AG04449 (cell line): ENCODE measurements at regions of chr2 and their contacts with region 1.

Region 1: GRCh38 chr2:120856421-120856862 is 120.8 kb downstream of the GLI2 start:
- DNase-seq: no peak
- H3K4me3 ChIP-seq: no peak overlapping the region
- CTCF ChIP-seq: peak; percentile 49

Region 2: GRCh38 chr2:120429586-120430500 is 426.6 kb before region 1 on chr2:
- CTCF ChIA-PET with region 1: no interaction called
- POLR2A ChIA-PET with region 1: no interaction called
- DNase-seq: no peak
- H3K4me3 ChIP-seq: no peak overlapping the region
- CTCF ChIP-seq: no peak

Region 3: DNA sequence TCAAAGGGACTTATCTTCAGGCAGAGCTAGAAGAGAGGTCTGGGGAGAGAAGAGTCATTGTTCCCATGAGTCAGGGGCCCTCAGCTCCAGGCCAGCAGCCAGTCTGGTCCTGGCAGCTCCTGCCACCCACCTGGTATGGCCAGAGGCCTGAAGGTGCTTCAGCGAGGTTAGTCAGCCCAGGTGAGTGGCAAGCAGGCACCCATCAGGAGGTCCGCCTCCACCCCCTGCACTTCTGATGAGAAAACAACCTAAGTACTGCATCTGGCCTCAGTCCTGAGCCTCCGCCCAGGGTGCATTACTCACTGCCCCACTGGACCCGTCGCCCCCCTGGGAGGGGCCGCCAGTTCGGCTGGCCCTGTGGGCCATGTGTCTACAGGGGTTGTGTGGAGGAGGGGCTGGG is 380.3 kb before region 1 on chr2:
- CTCF ChIA-PET with region 1: no interaction called
- POLR2A ChIA-PET with region 1: no interaction called
- DNase-seq: no peak
- H3K4me3 ChIP-seq: no peak overlapping the region
- CTCF ChIP-seq: no peak

Region 4: GRCh38 chr2:120867290-120868241 is 11.1 kb after region 1 on chr2:
- CTCF ChIA-PET with region 1: interaction called, 21 read pairs
- POLR2A ChIA-PET with region 1: interaction called, 3 read pairs
- DNase-seq: no peak
- H3K4me3 ChIP-seq: peak overlapping the region; percentile 56
- CTCF ChIP-seq: no peak

Region 5: GRCh38 chr2:120892967-120893667 is 36.7 kb after region 1 on chr2:
- CTCF ChIA-PET with region 1: no interaction called
- POLR2A ChIA-PET with region 1: no interaction called
- DNase-seq: no peak
- H3K4me3 ChIP-seq: no peak overlapping the region
- CTCF ChIP-seq: no peak